Calu3 (cell line): ENCODE measurements at regions of chr6 and their contacts with region 1.

Region 1: DNA sequence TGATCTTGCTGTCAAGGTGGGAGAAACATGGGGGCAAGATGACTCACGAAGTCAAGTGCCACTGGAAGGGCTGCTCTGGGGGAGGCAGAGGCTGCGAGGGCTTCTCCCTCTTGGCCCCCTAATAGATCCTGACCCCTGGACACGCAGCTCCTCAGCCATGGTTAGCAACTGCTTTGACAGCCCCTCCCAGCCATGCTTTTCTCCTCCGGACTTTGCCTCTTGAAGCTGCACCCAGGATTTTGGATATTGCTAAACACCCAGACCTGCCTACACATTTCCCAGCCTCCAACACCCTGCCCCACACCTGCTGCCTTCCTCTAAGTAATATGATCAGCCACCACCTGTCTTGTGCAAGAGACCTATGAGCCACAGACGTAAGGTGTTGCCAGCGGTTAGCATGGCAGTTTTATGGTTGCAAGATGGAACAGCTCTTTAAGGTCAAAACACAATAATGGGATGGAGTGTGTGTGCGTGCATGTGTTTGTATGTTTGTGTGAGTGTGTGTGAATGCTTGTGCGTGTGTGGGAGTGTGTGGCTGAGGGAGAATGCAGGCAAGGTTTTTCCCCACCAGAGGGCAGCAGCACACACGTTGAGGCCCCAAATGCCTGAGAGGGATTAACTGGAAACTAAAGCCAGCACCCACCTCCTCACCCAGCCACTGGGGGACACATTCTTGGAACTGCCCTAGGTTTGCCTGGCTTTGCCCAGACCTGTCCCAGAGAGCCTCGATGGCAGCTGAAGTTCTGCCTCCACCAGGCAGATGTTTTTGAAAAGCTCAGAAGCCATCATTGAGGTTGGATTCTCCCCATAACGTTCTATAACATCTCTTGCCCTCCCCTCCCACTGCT is 2.5 kb downstream of the IP6K3 start:
- DNase-seq: peak; percentile 89
- H3K4me3 Mint-ChIP-seq: peak overlapping the region; percentile 35
- H3K27ac Mint-ChIP-seq: peak overlapping the region; percentile 15
- H3K4me1 Mint-ChIP-seq: peaks cover 39% of the 10 kb centered on the region
- H3K27me3 Mint-ChIP-seq: peaks cover 24% of the 10 kb centered on the region
- CTCF ChIP-seq: peak; percentile 99

Region 2: DNA sequence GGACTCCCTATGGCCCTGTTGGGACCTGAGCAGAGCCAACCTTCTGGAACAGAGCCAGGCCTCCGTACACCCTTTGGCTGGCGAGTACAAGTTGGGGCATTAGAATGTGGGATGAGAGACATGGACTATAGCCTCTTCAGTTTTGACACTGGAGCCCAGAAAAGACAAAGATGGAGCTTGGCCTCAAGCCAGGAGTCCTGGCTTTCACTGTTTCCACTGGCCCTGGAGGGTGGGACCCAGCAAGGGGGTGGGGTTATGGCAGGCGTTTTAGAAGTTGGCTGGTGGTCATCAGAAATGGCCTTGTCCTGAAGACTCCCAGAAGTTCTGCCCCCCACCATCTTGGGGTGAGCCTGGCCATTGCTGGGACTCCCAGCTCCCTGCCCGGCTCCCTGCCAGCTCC is 101.3 kb before region 1 on chr6:
- CTCF ChIA-PET with region 1: no interaction called
- intact Hi-C with region 1: no loop called
- DNase-seq: no peak
- H3K4me3 Mint-ChIP-seq: no peak overlapping the region
- H3K27ac Mint-ChIP-seq: no peak overlapping the region
- H3K4me1 Mint-ChIP-seq: peaks cover 24% of the 10 kb centered on the region
- H3K27me3 Mint-ChIP-seq: no peaks in the 10 kb centered on the region
- CTCF ChIP-seq: no peak

Region 3: GRCh38 chr6:33732826-33733708 is 11.2 kb before region 1 on chr6:
- CTCF ChIA-PET with region 1: interaction called, 16 read pairs
- intact Hi-C with region 1: no loop called
- DNase-seq: no peak
- H3K4me3 Mint-ChIP-seq: no peak overlapping the region
- H3K27ac Mint-ChIP-seq: peak overlapping the region; percentile 50
- H3K4me1 Mint-ChIP-seq: peaks cover 37% of the 10 kb centered on the region
- H3K27me3 Mint-ChIP-seq: no peaks in the 10 kb centered on the region
- CTCF ChIP-seq: no peak

Region 4: DNA sequence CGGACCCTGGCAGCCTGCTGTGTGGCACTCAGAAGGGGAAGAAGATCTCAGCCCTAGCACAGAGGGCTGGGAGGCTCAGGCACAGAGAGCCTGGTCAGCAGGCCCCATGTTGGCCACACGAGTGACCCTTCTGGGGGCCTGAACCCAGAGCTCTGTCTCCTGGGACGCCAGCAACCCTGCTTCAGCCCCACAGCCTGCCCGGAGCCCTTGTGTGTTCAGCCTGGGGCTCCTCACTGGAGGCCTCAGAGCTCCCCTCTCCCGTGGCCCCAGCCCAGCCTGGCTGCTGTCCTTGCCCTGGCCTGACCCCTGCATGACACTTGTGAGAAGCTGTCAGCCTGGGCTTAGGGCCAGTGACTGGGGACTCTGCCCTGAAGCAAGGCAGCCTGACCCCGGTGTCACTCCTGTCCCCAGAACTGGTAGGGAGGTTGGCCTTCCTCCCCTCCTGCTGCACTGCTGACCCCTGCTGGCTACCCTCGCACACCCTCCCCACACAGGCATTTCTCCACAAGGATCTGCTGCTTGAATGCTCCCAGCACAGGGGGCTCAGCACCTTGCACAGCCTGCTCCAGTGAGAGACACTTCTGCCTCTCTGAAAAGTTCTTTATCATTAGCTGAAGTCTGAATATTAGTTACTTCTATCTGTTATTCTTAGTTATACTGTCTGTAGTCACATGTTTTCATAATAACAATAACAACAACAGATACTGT is 17.9 kb after region 1 on chr6:
- CTCF ChIA-PET with region 1: interaction called, 12 read pairs
- intact Hi-C with region 1: loop called (anchors 2 kb)
- DNase-seq: peak; percentile 91
- H3K4me3 Mint-ChIP-seq: no peak overlapping the region
- H3K27ac Mint-ChIP-seq: no peak overlapping the region
- H3K4me1 Mint-ChIP-seq: peaks cover 19% of the 10 kb centered on the region
- H3K27me3 Mint-ChIP-seq: peaks cover 41% of the 10 kb centered on the region
- CTCF ChIP-seq: peak; percentile 94

Region 5: GRCh38 chr6:33787954-33788693 is 43.9 kb after region 1 on chr6:
- CTCF ChIA-PET with region 1: no interaction called
- intact Hi-C with region 1: no loop called
- DNase-seq: peak; percentile 70
- H3K4me3 Mint-ChIP-seq: peak overlapping the region; percentile 77
- H3K27ac Mint-ChIP-seq: peak overlapping the region; percentile 75
- H3K4me1 Mint-ChIP-seq: peaks cover 9% of the 10 kb centered on the region
- H3K27me3 Mint-ChIP-seq: peaks cover 36% of the 10 kb centered on the region
- CTCF ChIP-seq: no peak

Region 6: DNA sequence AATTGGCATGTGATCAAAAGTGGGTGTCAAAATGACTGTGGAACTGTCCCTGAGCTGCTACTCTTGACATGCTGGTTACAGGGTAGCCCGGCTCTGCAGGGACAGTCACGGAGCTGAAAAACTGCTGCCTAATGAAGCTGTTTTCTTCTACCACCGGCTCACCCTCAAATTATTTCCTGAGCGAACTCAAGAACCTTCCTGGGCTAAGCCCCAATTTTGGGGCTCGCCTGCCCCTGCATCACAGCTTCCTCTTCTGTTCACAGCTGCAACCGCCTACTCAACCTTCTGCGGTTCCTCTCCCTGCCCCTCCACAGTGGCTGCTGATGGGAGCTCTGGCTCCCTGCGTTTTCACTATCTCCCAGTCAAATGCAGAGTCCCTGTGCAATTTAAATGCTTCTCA is 170.4 kb after region 1 on chr6:
- CTCF ChIA-PET with region 1: no interaction called
- intact Hi-C with region 1: no loop called
- DNase-seq: no peak
- H3K4me3 Mint-ChIP-seq: no peak overlapping the region
- H3K27ac Mint-ChIP-seq: no peak overlapping the region
- H3K4me1 Mint-ChIP-seq: no peaks in the 10 kb centered on the region
- H3K27me3 Mint-ChIP-seq: peaks cover 92% of the 10 kb centered on the region
- CTCF ChIP-seq: no peak

Region 7: GRCh38 chr6:34074064-34074742 is 330.0 kb after region 1 on chr6:
- CTCF ChIA-PET with region 1: no interaction called
- intact Hi-C with region 1: no loop called
- DNase-seq: no peak
- H3K4me3 Mint-ChIP-seq: no peak overlapping the region
- H3K27ac Mint-ChIP-seq: no peak overlapping the region
- H3K4me1 Mint-ChIP-seq: no peaks in the 10 kb centered on the region
- H3K27me3 Mint-ChIP-seq: peaks cover 40% of the 10 kb centered on the region
- CTCF ChIP-seq: peak; percentile 8